ENCODE measurements at regions of chr1 and their contacts with region 1.

Region 1: GRCh38 chr1:207321079-207321789 is at the start of gene CD55:
- DNase-seq: peak; percentile 99
- ATAC-seq: peak; percentile 93
- H3K4me3 Mint-ChIP-seq: peak within 1 kb of the TSS; percentile 95
- H3K27ac Mint-ChIP-seq: peak within 1 kb of the TSS; percentile 100
- H3K4me1 Mint-ChIP-seq: peaks cover 31% of the 10 kb centered on the region
- H3K27me3 Mint-ChIP-seq: no peaks in the 10 kb centered on the region
- total RNA-seq, gene CD55: 56.8 to 92.7 TPM

Region 2: DNA sequence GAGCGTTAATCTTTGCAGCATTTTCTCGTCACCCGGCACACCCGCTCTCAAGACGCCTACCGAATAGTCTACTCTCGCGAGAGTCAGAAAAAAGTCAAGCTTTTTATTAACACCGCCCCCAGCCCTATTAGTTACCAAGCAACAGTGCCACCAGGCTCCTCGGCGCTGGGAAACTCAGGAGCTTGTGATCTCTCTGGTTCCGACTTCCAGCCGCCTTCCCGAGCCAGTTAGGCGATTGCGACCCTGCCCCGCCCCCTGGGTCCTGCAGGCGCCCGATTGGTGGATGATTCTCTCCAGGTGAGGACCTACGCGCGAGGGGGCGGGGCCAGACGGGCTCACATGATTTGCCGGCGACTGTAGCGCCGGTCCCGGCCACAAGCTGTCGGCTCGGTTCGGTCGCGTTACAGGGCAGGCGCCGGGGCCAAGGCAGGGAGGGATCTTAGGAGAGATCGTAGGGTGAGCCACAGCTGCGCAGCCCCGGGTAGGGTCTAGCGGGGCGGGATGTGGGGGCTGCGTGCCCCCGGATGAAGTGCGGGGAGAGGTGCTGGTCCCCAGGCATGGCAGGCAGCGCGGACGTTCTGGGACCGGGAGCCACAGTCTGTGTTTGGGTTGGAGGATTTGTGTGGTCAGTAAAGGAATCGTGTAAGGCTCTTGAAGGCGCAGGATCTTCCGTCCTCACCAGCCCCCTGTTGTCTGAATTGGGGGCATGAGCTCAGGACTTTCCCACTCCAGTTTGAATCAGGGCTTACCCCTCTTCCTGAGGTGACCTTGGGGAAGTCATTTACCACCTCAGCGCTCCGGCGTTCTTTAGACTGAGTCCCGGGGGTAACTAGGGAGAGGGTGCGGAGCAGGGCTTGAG is 268.1 kb before region 1 on chr1 and contains the start of gene PFKFB2:
- CTCF ChIA-PET with region 1: no interaction called
- POLR2A ChIA-PET with region 1: interaction called, 5 read pairs
- intact Hi-C with region 1: loop called (anchors 1 to 2 kb)
- DNase-seq: peak; percentile 96
- ATAC-seq: peak; percentile 83
- H3K4me3 Mint-ChIP-seq: peak within 1 kb of the TSS; percentile 99
- H3K27ac Mint-ChIP-seq: peak within 1 kb of the TSS; percentile 89
- H3K4me1 Mint-ChIP-seq: peaks cover 39% of the 10 kb centered on the region
- H3K27me3 Mint-ChIP-seq: no peaks in the 10 kb centered on the region
- total RNA-seq, gene PFKFB2: 3.1 to 3.5 TPM

Region 3: GRCh38 chr1:207336559-207337467 is 15.6 kb after region 1 on chr1:
- CTCF ChIA-PET with region 1: interaction called, 16 read pairs
- POLR2A ChIA-PET with region 1: interaction called, 49 read pairs
- intact Hi-C with region 1: loop called (anchors 1 kb)
- DNase-seq: peak; percentile 55
- ATAC-seq: peak; percentile 67
- H3K4me3 Mint-ChIP-seq: peak overlapping the region; percentile 8
- H3K27ac Mint-ChIP-seq: peak overlapping the region; percentile 86
- H3K4me1 Mint-ChIP-seq: peaks cover 69% of the 10 kb centered on the region
- H3K27me3 Mint-ChIP-seq: no peaks in the 10 kb centered on the region

Region 4: DNA sequence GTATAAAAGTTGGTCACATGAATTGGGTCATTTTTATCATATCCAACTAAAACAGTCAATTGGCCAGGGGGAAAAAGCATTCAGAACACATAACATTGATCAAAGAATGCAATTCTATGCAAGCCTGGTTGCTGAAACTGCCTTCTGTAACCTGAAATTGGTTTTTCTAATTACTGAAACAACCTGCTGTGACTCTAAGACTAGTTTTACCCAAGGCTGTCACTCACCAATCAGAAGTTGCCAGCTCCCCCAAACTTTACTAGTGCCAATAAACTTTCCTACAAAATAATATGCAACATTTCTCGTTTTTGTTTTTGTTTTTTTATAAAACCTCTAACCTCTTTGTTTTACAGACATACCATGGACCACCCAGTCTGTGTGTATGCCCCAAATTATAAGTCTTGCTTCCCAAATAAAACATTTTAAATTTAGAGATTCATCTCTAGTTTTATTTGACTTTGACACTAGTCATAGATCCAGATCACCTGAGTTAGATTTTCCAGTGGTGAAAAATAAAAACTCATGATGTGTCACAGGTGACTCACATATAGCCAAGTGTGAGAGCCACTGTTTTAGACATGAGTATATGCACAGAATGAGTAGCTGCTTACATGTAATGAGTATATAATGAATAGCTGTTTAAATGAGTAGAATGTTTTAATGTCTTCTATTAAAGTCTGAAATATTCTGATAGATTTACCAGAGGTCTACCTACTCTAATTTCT is 68.7 kb after region 1 on chr1:
- CTCF ChIA-PET with region 1: no interaction called
- POLR2A ChIA-PET with region 1: no interaction called
- intact Hi-C with region 1: loop called (anchors 1 kb)
- DNase-seq: peak; percentile 29
- ATAC-seq: peak; percentile 98
- H3K4me3 Mint-ChIP-seq: no peak overlapping the region
- H3K27ac Mint-ChIP-seq: peak overlapping the region; percentile 83
- H3K4me1 Mint-ChIP-seq: peaks cover 19% of the 10 kb centered on the region
- H3K27me3 Mint-ChIP-seq: no peaks in the 10 kb centered on the region

Region 5: GRCh38 chr1:207414606-207415108 is 93.4 kb after region 1 on chr1:
- CTCF ChIA-PET with region 1: interaction called, 3 read pairs
- POLR2A ChIA-PET with region 1: interaction called, 4 read pairs
- intact Hi-C with region 1: loop called in 1 of 2 experiments (anchors 2 kb)
- DNase-seq: peak; percentile 75
- ATAC-seq: peak; percentile 74
- H3K4me3 Mint-ChIP-seq: no peak overlapping the region
- H3K27ac Mint-ChIP-seq: peak overlapping the region; percentile 10
- H3K4me1 Mint-ChIP-seq: peaks cover 37% of the 10 kb centered on the region
- H3K27me3 Mint-ChIP-seq: peaks cover 4% of the 10 kb centered on the region